ENCODE measurements at regions of chr17 and their contacts with region 1.

Region 1: GRCh38 chr17:409848-410545 is 57.4 kb upstream of the RPH3AL start:
- DNase-seq: peak; percentile 98
- H3K4me3 ChIP-seq: peak overlapping the region; percentile 82
- H3K27ac ChIP-seq: peak overlapping the region; percentile 75
- H3K27me3 ChIP-seq: no peaks in the 10 kb centered on the region
- CTCF ChIP-seq: no peak

Region 2: GRCh38 chr17:429589-429988 is 19.6 kb after region 1 on chr17:
- CTCF ChIA-PET with region 1: interaction called, 40 read pairs
- POLR2A ChIA-PET with region 1: no interaction called
- DNase-seq: no peak
- H3K4me3 ChIP-seq: no peak overlapping the region
- H3K27ac ChIP-seq: no peak overlapping the region
- H3K27me3 ChIP-seq: no peaks in the 10 kb centered on the region
- CTCF ChIP-seq: no peak

Region 3: GRCh38 chr17:688100-688989 is 278.3 kb after region 1 on chr17:
- CTCF ChIA-PET with region 1: interaction called, 468 read pairs
- POLR2A ChIA-PET with region 1: interaction called, 3 read pairs
- DNase-seq: no peak
- H3K4me3 ChIP-seq: no peak overlapping the region
- H3K27ac ChIP-seq: no peak overlapping the region
- H3K27me3 ChIP-seq: no peaks in the 10 kb centered on the region
- CTCF ChIP-seq: peak; percentile 30; the same call in 1 of the 2 replicates

Region 4: GRCh38 chr17:979538-980405 is 569.8 kb after region 1 on chr17 and contains the start of gene NXN:
- CTCF ChIA-PET with region 1: interaction called, 12 read pairs
- POLR2A ChIA-PET with region 1: no interaction called
- DNase-seq: no peak
- H3K4me3 ChIP-seq: peak within 1 kb of the TSS; percentile 86
- H3K27ac ChIP-seq: peak within 1 kb of the TSS; percentile 57
- H3K27me3 ChIP-seq: no peaks in the 10 kb centered on the region
- CTCF ChIP-seq: 0 out of 2 replicates have a peak, but pooled peaks have one; percentile 25
- polyA plus RNA-seq, gene NXN: 118 and 135 TPM in 2 replicates

Measured in AG04450 (cell line).